SK-N-SH (cell line): ENCODE measurements at regions of chr20 and their contacts with region 1.

Region 1: DNA sequence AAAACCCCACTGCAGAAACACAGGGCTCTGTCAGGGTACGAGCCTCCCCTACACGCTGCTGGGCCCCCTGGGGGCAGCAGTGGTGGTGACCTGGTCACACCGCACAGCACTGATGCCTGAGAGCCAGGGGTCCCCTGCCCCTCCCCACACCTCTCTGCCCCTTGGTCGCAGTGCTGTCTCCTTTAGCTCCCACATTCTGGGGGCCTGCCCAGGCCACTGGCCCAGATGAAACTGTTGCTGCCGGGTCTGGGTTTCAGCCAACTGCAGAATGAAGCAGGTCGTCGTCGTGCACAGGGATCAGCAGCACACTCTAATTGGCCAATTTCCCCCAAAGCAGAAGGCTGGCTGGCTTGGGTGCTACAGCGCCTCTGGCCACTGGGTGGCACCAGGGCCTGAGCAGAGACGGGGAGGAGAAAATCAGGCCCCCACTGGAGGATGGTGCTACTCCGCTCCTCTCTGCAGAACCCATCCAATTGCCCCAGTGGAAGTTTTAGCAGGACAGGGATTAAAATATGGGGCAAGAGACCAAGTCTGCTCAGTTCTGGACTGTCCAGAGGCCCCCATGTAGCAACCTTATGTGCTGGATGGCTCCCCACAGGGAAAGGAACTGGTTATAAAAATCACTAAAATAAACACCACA is 26.1 kb downstream of the DIDO1 start:
- DNase-seq: peak; percentile 94
- H3K4me3 ChIP-seq: no peak overlapping the region; a peak in 1 of 4 replicates
- H3K27ac ChIP-seq: peak overlapping the region; percentile 13 to 39; a peak in 2 of 4 replicates
- H3K4me1 ChIP-seq: peaks cover 4 to 15% of the 10 kb centered on the region in 2 experiments; a peak in 2 of 4 replicates
- H3K27me3 ChIP-seq: no peaks in the 10 kb centered on the region
- CTCF ChIP-seq: peak; percentile 77
- EP300 ChIP-seq: no peak
- RAD21 ChIP-seq: peak; percentile 76

Region 2: DNA sequence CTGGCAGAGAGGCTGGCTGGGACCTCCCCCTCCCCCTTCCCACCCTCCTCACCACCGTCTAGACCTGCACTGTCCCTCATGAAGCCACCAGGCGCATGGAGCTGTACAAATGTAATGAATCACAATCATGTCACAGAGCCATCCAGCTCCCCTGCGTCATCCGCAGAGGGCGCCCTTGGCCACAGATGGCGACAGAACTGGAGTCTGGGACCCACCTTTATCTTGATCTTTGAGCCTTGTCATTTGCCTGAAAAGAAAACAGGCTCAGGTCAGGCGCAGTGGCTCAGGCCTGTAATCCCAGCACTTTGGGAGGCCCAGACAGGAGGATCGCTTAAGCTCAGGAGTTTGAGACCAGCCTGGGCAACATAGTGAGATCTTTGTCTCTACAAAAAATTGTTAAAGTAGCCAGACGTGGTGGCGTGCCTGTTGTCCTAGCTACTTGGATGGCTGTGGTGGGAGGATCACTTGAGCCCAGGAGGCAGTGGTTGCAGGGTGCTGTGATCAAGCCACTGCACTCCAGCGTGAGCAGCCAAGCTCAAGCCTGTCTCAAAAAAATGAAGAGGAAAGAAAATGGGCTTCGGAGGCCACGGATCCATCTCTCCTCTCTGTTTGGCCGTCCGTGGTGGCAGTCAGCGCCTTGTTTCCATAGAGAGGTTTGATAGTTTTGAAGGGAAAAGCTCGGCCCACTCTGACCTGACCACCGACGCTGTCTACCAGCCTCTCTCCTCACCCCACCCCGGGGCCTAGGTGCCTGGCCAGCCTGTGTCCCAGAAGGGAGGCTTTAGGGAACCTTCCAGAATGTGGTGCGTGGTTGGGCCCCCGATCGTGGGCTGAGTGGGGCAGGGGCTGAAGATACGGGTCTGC is 77.2 kb before region 1 on chr20:
- CTCF ChIA-PET with region 1: interaction called, 11 read pairs
- POLR2A ChIA-PET with region 1: no interaction called
- DNase-seq: peak; percentile 89
- H3K4me3 ChIP-seq: no peak overlapping the region
- H3K27ac ChIP-seq: peak overlapping the region in 1 of 2 experiments; percentile 56; a peak in 1 of 4 replicates
- H3K4me1 ChIP-seq: peaks cover 19 to 58% of the 10 kb centered on the region in 2 experiments; a peak in 3 of 4 replicates
- H3K27me3 ChIP-seq: no peaks in the 10 kb centered on the region
- CTCF ChIP-seq: peak; percentile 61
- EP300 ChIP-seq: 0 out of 4 replicates have a peak, but pooled peaks of 1 of the 2 experiments have one; percentile 35
- RAD21 ChIP-seq: peak; percentile 88

Region 3: DNA sequence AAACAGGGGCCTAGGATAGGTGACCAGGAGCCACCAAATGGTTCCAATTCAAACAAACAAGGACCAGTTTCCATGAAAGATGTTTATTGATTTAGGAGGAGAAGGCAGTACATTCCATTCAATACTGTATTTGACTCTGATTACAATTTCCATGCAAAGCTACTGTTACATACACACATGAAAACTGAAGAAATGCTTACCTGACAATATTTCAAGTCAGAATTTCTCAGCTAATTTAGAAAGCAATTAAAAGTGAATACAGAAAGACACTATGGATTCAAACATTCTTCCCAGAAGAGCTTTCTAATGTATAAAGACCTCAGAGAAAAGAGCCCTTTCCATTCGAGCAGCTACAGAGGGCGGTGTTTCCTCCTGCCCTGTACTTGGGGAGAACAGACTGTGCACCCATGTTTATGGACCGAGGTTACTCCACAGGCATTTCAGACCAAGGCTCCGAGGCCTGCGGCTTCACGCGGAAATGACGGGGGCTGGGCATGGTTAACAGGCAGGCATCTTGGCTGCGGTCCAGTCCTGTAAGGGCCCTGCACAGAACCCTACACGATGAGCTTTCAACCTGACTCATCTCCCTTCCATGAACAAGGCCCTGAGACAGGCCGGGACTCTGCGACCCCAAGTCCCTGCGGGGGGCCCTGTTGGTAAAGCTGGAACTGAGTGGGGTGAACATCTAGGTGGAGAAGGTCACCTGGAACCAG is 12.9 kb before region 1 on chr20:
- CTCF ChIA-PET with region 1: interaction called, 77 read pairs
- POLR2A ChIA-PET with region 1: no interaction called
- DNase-seq: peak; percentile 80
- H3K4me3 ChIP-seq: no peak overlapping the region
- H3K27ac ChIP-seq: peak overlapping the region; percentile 65 to 79
- H3K4me1 ChIP-seq: peaks cover 17 to 19% of the 10 kb centered on the region in 2 experiments
- H3K27me3 ChIP-seq: no peaks in the 10 kb centered on the region
- CTCF ChIP-seq: no peak
- EP300 ChIP-seq: no peak
- RAD21 ChIP-seq: no peak

Region 4: GRCh38 chr20:62937366-62938104 is 37.4 kb after region 1 on chr20:
- CTCF ChIA-PET with region 1: interaction called, 11 read pairs
- POLR2A ChIA-PET with region 1: no interaction called
- DNase-seq: peak; percentile 97
- H3K4me3 ChIP-seq: peak overlapping the region; percentile 84 to 86
- H3K27ac ChIP-seq: peak overlapping the region; percentile 83 to 89
- H3K4me1 ChIP-seq: peaks cover 11 to 21% of the 10 kb centered on the region in 2 experiments
- H3K27me3 ChIP-seq: no peaks in the 10 kb centered on the region
- CTCF ChIP-seq: no peak
- EP300 ChIP-seq: no peak
- RAD21 ChIP-seq: no peak

Region 5: DNA sequence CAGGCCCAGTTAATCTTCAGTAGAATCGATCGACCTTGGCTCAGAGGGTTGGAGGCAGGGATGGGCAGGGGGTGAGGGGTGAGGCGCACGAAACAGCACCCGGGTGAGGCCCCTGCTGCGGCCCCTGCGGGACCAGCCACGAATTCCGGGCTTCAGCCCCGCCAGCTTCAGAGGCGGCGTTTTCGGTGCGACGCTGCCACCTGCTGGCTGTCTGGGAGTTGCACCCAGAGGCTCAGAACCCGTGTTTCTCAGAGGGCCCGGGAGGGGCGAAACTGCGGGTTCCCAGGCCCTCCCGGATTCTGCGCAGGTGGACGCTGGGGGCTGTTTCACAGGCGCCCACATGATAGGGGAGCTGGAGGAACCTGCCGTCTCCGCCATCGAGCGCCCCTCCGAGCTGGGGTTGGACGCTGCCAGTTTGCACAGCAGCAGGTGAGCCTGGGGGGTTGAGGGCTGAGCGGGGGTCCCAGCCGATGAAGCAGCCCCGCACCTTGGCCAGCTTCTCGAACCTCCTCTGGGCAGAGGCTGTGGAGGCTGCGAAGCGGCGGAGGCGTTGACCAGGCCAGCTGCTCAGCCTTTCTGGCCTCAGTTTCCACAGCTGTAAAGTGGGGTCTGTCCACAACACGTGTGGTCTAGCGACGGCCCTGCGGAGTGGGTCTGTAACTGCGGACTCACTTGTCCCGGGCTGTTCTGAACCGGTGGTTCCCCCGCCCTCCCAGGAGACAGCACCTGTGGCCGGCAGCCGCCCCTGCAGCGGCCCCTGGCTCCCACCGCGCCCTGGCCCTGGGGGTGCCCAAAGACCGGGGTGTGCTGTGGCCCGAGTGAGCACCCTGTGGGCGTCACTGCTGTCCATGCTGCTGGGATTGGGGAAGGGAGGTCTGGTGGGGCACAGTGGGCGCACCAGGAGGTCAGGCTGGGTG is 109.1 kb after region 1 on chr20:
- CTCF ChIA-PET with region 1: interaction called, 29 read pairs
- POLR2A ChIA-PET with region 1: no interaction called
- DNase-seq: peak; percentile 95
- H3K4me3 ChIP-seq: no peak overlapping the region; a peak in 1 of 4 replicates
- H3K27ac ChIP-seq: no peak overlapping the region
- H3K4me1 ChIP-seq: peaks cover 0 to 3% of the 10 kb centered on the region in 2 experiments; a peak in 1 of 4 replicates
- H3K27me3 ChIP-seq: peaks cover 92% of the 10 kb centered on the region
- CTCF ChIP-seq: peak; percentile 90
- EP300 ChIP-seq: no peak
- RAD21 ChIP-seq: peak; percentile 90